BJ (cell line): ENCODE measurements at regions of chr3 and their contacts with region 1.

Region 1: GRCh38 chr3:66822186-66823008 is 175.7 kb upstream of the KBTBD8 start:
- DNase-seq: no peak
- H3K4me3 ChIP-seq: no peak overlapping the region
- H3K27me3 ChIP-seq: peaks cover 6% of the 10 kb centered on the region
- CTCF ChIP-seq: peak; percentile 79

Region 2: DNA sequence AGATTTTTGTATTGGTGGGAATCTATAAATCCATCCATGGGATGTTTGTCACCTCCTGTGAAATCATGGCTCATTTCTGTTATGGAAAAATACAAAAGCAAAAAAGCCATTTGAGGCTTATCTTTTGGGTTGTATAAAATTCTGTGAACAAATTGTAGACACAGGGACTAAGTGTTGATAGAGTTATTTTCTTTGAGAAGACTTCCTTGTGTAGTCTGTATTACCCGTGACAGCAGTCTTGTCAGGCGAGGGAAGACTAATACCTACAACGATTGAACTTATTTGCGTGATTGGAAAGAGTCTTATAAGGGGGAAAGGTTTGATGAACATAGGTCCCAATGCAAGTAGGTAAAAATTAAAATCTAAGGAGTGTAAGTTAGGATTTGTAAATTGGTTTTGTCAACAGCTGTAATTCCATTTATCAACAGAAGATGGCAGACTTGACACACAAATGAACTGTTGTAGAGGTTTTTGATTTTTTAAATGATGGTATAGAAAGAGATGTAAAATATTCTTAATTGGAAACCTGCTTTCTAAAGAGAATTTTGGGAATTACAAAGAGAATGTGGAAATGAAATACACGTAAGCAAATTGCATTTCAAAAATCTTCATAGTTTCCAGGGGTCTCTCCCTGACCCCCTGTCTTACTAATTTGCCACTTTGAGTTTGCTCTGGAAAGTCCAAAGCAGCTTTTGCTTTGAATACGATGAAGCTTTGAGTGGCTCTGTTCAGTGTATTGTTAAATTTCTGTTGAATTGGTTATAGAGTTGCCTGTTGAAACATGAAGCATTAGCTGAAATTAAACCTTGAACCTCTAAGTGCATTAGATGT is 568.4 kb before region 1 on chr3:
- CTCF ChIA-PET with region 1: interaction called, 117 read pairs
- POLR2A ChIA-PET with region 1: no interaction called
- DNase-seq: no peak
- H3K4me3 ChIP-seq: no peak overlapping the region
- H3K27me3 ChIP-seq: no peaks in the 10 kb centered on the region
- CTCF ChIP-seq: peak; percentile 57

Region 3: DNA sequence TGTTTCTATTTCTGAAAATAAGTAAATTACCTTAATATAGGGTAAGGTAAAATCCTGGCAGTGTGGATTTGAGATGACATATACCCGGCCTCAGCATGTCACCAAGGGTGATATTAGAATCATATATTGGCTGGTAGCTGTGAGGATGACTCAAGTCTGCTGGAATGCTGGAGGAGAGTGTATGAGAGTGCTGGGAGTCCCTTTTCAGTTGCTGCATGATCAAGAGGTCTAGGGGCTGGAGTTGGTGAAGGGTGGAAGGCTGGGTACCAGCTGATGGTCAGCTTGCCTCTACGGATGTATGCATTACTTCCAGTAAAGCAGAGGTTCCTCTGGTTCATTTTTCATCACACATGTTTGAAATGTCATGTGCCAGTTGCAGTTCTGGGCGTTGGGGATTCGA is 561.0 kb before region 1 on chr3:
- CTCF ChIA-PET with region 1: interaction called, 117 read pairs
- POLR2A ChIA-PET with region 1: no interaction called
- DNase-seq: no peak
- H3K4me3 ChIP-seq: no peak overlapping the region
- H3K27me3 ChIP-seq: no peaks in the 10 kb centered on the region
- CTCF ChIP-seq: no peak

Region 4: GRCh38 chr3:66270701-66271100 is 551.7 kb before region 1 on chr3:
- CTCF ChIA-PET with region 1: interaction called, 23 read pairs
- POLR2A ChIA-PET with region 1: no interaction called
- DNase-seq: no peak
- H3K4me3 ChIP-seq: no peak overlapping the region
- H3K27me3 ChIP-seq: no peaks in the 10 kb centered on the region
- CTCF ChIP-seq: no peak

Region 5: DNA sequence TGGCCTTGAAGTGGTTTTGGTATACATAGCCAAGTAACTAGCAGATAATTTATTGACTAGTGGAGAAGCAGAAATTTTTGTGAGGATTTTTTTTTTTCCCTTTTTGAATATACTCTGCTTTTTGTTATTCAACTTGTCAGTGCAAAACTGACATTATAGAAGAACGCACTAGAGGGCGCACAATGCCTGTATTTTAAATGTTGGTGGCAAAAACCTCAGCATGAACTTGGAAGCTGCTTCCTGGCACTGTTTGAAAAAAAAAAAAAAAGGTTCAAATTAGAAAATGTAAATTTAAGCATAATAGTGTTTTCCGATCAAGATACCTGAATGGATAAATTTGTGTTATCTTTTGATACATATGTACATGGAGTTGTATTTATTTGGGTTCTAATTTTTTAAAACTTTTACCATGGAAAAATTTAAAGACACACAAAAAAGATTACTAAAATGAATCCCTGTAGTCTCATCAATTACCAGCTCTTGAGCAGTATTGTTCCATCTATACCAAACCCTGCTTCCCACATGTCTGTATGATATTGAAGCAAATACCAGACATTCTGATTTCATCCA is 545.6 kb before region 1 on chr3:
- CTCF ChIA-PET with region 1: interaction called, 42 read pairs
- POLR2A ChIA-PET with region 1: no interaction called
- DNase-seq: no peak
- H3K4me3 ChIP-seq: no peak overlapping the region
- H3K27me3 ChIP-seq: no peaks in the 10 kb centered on the region
- CTCF ChIP-seq: peak; percentile 55

Region 6: DNA sequence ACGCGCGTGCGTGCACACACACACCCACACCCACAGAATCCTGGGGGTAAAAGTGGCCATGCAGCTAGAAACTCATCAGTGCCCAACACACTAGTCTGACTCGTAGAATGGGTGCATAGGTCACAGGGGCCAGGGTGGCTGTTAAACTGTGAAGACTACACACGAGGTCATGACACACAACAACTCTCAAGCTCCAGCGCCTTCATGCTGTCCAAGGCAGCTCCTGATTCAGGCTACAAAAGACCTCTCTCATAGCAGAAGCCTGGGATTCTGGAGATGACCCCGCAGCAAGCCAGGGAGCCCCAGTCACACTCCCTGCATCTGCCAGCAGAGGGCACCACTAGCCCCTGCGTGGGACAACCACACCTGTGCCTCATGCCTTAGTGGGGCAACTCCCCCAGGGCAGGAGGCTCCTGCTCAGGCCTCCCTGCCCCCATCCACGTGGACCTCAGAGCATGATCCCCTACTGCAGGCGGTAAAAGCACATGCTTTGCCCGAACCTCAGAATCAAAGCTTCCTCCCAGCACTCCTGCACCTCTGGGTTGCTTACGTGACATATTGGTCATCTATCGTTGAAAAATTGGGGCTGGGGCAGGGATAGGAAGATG is 414.7 kb before region 1 on chr3:
- CTCF ChIA-PET with region 1: interaction called, 61 read pairs
- POLR2A ChIA-PET with region 1: no interaction called
- DNase-seq: no peak
- H3K4me3 ChIP-seq: no peak overlapping the region
- H3K27me3 ChIP-seq: no peaks in the 10 kb centered on the region
- CTCF ChIP-seq: peak; percentile 91